ENCODE measurements at regions of chr2 and their contacts with region 1.

Region 1: GRCh38 chr2:180258579-180258978 is 251.5 kb upstream of the CWC22 start:
- DNase-seq: no peak
- H3K4me3 ChIP-seq: no peak overlapping the region
- H3K27ac ChIP-seq: no peak overlapping the region
- H3K27me3 ChIP-seq: no peaks in the 10 kb centered on the region
- CTCF ChIP-seq: no peak

Region 2: DNA sequence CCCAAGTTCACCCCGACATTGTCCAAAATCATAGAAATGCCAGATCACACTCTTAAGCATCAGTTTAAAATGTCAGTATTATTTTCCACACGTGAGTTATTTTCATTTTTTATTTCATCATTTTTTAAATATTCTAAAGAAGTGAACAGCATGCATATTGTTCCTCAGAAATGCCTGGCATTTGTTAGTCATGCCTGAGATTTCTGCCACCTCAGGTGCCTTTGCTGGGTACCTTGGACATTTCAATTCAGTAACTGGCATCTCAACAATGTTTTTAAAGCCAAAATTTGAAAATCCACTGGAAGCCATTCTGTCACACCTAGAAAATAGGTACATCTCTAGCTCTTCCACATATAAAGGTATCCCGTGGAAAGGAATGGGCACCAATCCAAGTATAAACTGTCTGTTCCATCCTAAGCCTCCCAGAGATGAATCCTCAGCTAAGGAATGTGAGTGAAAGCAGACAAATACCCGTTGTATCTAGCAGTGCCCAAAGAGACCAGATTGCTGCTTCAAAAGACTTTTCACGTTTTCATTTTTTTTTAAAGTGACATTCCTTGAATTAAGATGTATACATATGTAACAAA is 557.0 kb before region 1 on chr2:
- CTCF ChIA-PET with region 1: no interaction called
- POLR2A ChIA-PET with region 1: no interaction called
- DNase-seq: no peak
- H3K4me3 ChIP-seq: no peak overlapping the region
- H3K27ac ChIP-seq: no peak overlapping the region
- H3K27me3 ChIP-seq: no peaks in the 10 kb centered on the region
- CTCF ChIP-seq: no peak

Region 3: DNA sequence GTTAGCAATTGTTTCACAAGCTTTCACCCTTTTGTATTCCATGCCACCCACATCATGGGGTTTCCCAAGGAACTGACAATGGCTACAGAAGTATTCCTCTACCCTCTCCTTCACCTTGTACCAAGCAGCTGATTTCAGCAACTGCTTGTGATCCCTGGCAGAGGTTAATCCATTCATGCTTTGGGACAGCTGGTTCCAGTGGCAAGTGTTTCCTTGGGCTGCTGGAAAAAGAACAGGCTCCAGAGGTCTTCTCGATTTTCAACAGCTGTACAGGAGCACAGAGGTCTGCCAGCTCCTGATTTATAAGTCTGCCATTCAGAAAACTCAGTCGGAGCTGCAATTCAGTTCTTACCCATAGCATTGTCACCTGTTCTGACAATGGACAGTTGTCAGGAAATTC is 12.3 kb before region 1 on chr2:
- CTCF ChIA-PET with region 1: no interaction called
- POLR2A ChIA-PET with region 1: no interaction called
- DNase-seq: no peak
- H3K4me3 ChIP-seq: no peak overlapping the region
- H3K27ac ChIP-seq: no peak overlapping the region
- H3K27me3 ChIP-seq: no peaks in the 10 kb centered on the region
- CTCF ChIP-seq: no peak

Region 4: GRCh38 chr2:180291552-180292421 is 33.2 kb after region 1 on chr2:
- CTCF ChIA-PET with region 1: interaction called, 15 read pairs
- POLR2A ChIA-PET with region 1: no interaction called
- DNase-seq: no peak
- H3K4me3 ChIP-seq: no peak overlapping the region
- H3K27ac ChIP-seq: no peak overlapping the region
- H3K27me3 ChIP-seq: no peaks in the 10 kb centered on the region
- CTCF ChIP-seq: no peak